Heart right ventricle (tissue), 16 donors: ENCODE measurements at regions of chr3 and their contacts with region 1.

Region 1: DNA sequence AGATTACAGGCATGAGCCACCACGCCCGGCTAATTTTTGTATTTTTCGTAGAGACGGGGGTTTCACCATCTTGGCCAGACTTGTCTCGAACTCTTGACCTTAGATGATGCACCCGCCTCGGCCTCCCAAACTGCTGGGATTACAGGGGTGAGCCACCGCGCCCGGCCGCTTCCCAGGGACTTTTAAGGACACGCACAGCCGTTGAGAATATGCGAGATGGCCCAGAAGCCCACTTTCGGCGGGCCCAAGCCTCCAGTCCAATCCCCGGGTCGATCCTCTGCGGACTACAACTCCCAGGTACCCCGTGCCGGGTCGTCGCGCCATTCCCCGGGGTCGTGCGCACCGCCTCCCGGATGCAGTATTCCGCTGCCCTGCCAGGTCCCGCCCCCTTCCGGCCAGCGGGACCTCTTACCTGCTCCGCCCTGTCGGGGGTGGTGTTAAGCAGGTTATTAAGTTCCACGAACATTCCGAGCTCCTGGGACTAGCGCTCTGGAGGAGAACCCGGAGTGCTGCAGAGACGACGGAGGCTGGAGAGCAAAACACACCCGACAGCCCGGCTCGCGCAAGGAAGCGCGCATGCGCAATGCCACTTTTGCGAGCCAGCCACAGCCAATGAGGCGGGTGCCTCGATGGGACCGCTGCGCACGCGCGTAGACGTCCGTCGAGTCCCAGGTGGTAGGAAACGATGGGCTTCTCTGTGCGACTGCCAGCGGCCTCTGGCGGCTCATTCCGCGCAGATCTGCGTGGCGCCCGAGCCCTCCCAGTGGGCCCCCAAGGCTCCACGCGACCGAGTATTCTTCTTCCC is at the start of gene ELP6:
- DNase-seq: peak; percentile 97
- ATAC-seq: peak; percentile 98 to 100 (median 99)
- H3K4me3 ChIP-seq: peak within 1 kb of the TSS; percentile 61 to 79 (median 68)
- H3K27ac ChIP-seq: peak within 1 kb of the TSS; percentile 82 to 95 (median 92)
- H3K4me1 ChIP-seq: peaks cover 3 to 16% (median 11%) of the 10 kb centered on the region in 9 donors
- H3K27me3 ChIP-seq: no peaks in the 10 kb centered on the region
- CTCF ChIP-seq: peak in 8 of 9 donors; percentile 31 to 68 (median 50)
- total RNA-seq, gene ELP6: 16.5 to 22.5 (median 20.2) TPM

Region 2: DNA sequence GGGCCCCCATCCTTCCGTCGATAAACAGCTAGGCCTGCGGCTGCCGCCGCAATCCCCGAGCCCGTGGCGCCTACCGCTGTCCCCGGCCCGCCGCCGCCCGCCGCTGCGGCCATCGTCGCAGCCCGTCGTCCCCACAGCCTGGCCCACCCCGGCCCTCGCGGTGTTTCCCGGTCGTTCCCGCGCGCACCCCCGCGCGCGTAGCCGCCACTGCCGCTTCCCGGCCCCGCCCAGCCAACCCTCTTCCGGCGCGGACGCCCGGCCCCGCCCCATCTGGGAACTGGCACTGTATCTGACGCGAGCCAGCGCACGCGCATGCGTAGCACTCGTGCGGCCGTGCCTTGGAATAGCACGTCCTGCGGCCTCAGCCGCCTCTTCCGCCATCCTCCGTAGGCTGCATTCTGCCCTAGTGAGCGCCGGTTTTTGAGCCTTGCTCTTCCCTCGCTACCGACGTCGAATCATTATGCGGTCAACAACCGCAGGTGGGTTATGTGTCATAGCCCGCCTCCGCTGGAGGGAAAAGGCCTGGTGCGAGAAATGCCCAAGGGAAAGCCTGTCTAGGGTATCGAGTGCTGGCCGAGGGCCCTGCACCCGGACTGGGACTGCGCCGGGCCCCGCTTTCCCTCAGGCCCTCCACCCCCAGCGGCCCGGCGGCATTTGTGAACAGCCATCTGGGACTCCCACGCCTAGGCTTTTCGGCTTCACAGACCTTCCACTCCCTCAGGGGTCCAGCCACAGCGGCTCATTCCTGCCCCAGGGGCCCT is 268.5 kb after region 1 on chr3 and contains the start of gene SMARCC1:
- intact Hi-C with region 1: loop called in 2 of 10 experiments (anchors 2 to 5 kb)
- DNase-seq: peak; percentile 97 to 99
- ATAC-seq: peak; percentile 98 to 100 (median 100)
- H3K4me3 ChIP-seq: peak within 1 kb of the TSS; percentile 56 to 94 (median 88)
- H3K27ac ChIP-seq: peak within 1 kb of the TSS; percentile 96 to 99 (median 96)
- H3K4me1 ChIP-seq: peaks cover 3 to 48% (median 33%) of the 10 kb centered on the region in 9 donors
- H3K27me3 ChIP-seq: no peaks in the 10 kb centered on the region
- CTCF ChIP-seq: peak in 2 of 9 donors; percentile 15 to 17
- total RNA-seq, gene SMARCC1: 22.5 to 34.9 (median 24.6) TPM

Region 3: DNA sequence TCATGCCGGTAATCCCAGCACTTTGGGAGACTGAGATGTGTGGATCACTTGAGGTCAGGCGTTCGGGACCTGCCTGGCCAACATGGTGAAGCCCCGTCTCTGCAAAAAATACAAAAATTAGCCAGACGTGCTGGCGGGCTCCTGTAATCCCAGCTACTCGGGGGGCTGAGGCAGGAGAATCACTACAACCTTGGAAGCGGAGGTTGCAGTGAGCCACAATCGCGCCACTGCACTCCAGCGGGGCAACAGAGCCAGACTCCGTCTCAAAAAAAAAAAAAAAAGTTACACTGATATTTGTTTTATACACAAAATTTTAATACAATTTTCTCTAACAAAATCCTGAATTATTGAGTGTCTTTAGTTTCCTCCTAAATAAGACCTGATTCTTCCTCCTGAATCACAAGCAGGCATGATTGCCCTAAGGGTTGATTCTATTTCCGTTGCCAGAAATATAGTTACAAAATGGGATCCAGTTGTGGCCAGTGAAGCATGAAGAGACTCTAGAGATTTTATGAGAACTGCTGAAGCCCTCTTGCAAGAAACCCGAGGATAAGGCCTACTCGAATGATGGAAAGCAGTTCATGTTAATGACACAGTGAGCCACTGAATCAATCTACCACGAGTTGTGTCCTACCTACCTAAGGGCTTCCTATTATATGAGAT is 278.0 kb after region 1 on chr3:
- intact Hi-C with region 1: loop called in 1 of 10 experiments (anchors 2 kb)
- DNase-seq: no peak
- ATAC-seq: no peak
- H3K4me3 ChIP-seq: no peak overlapping the region
- H3K27ac ChIP-seq: no peak overlapping the region
- H3K4me1 ChIP-seq: peaks cover 0 to 5% (median 3%) of the 10 kb centered on the region in 9 donors
- H3K27me3 ChIP-seq: no peaks in the 10 kb centered on the region
- CTCF ChIP-seq: no peak

Region 4: DNA sequence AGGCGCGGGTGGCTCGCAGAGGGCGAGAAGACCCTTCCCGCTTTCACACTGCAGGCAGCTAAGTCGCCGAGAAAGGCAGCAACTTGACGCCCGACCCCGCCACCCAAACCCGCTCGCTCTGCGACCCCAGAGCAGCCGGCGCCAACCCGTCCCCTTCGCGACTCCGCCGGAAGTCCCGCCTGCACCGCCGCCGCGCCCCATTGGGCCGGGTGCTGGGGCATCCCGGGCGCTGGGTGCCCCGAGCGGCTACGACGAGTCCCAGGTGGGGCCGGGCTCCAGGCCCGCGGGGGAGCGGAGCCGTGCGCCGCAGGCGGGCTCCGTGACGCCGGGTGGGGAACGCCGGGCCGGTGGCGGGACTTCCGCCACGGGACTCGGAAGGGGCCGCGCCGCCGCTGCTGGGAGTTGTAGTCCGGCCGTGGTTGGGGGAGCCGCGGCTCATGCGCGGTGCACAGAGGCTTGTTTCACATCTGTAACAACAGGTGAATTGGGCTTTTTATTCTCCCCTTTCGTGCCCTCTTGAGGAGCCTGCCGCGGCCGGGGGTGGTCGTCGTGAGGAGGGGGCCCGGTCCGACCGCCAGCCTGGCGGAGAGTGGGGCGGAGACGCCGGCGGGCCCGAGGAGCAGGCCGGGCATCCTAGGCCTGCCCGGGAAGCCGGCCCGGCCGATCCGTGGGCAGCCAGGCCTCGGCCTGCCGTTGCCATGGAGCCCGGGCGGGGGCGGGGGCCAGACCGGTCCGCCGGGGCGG is 289.6 kb after region 1 on chr3 and contains the start of gene DHX30:
- intact Hi-C with region 1: loop called in 1 of 10 experiments (anchors 5 kb)
- DNase-seq: peak; percentile 88 to 91
- ATAC-seq: peak; percentile 87 to 96 (median 94)
- H3K4me3 ChIP-seq: peak within 1 kb of the TSS; percentile 63 to 96 (median 86)
- H3K27ac ChIP-seq: peak within 1 kb of the TSS; percentile 89 to 99 (median 98)
- H3K4me1 ChIP-seq: peaks cover 6 to 27% (median 22%) of the 10 kb centered on the region in 9 donors
- H3K27me3 ChIP-seq: no peaks in the 10 kb centered on the region
- CTCF ChIP-seq: no peak
- total RNA-seq, gene DHX30: 39.1 to 56.4 (median 45.3) TPM